HepG2 (cell line): ENCODE measurements at regions of chr9 and their contacts with region 1.

Region 1: DNA sequence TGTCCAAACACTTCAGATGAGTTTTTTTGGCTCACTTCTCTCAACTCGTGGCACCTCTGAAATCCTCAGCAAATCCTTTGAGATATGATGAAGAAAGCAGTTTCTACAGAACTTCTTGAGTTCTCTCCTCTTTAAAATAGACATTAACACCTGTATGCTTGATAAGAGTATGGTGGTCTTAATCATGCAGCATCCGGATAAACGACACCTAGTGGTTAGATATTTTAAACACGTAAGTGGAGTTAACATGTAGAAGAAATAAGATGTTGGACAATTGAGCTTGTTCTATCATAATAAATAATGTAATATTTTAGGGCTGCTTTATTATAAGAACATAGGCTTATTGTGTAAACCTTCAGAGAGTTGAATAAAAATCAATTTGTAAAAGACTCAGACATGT is 324.8 kb downstream of the CYLC2 start:
- DNase-seq: no peak
- ATAC-seq: no peak
- H3K4me3 ChIP-seq: no peak overlapping the region
- H3K27ac ChIP-seq: no peak overlapping the region
- H3K4me1 ChIP-seq: no peaks in the 10 kb centered on the region
- H3K27me3 ChIP-seq: no peaks in the 10 kb centered on the region
- CTCF ChIP-seq: no peak
- EP300 ChIP-seq: no peak
- POLR2A ChIP-seq: no peak
- RAD21 ChIP-seq: no peak

Region 2: GRCh38 chr9:101791938-101792337 is 1528.0 kb before region 1 on chr9:
- CTCF ChIA-PET with region 1: no interaction called
- POLR2A ChIA-PET with region 1: no interaction called
- in situ Hi-C with region 1: no loop called
- intact Hi-C with region 1: loop called (anchors 2 kb)
- DNase-seq: peak; percentile 31
- ATAC-seq: peak; percentile 98
- H3K4me3 ChIP-seq: no peak overlapping the region
- H3K27ac ChIP-seq: no peak overlapping the region
- H3K4me1 ChIP-seq: no peaks in the 10 kb centered on the region
- H3K27me3 ChIP-seq: no peaks in the 10 kb centered on the region
- CTCF ChIP-seq: peak; percentile 81
- EP300 ChIP-seq: no peak
- POLR2A ChIP-seq: no peak
- RAD21 ChIP-seq: 0 out of 2 replicates have a peak, but pooled peaks have one; percentile 17

Region 3: DNA sequence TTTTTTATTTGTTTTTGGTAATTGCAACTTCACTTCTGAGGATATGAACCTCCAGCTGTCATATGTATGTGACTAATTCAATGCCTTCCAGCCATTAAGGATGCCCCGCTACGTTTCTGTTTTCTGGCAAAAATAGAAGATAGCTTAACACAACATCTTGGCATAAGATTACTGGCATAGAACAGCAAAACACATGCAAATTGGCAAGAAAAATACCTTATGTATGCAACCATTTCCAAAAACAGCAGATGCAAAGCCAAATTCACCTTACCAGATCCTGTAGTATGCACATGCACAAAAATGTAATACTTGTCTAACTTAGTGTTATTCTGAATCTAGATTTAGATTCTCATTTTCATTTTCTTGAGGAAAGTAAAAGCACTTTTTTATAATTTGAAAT is 785.9 kb before region 1 on chr9:
- CTCF ChIA-PET with region 1: no interaction called
- POLR2A ChIA-PET with region 1: no interaction called
- in situ Hi-C with region 1: no loop called
- intact Hi-C with region 1: no loop called
- DNase-seq: no peak
- ATAC-seq: no peak
- H3K4me3 ChIP-seq: no peak overlapping the region
- H3K27ac ChIP-seq: no peak overlapping the region
- H3K4me1 ChIP-seq: no peaks in the 10 kb centered on the region
- H3K27me3 ChIP-seq: no peaks in the 10 kb centered on the region
- CTCF ChIP-seq: no peak
- EP300 ChIP-seq: no peak
- POLR2A ChIP-seq: no peak
- RAD21 ChIP-seq: no peak

Region 4: GRCh38 chr9:103304797-103305443 is 15.1 kb before region 1 on chr9:
- CTCF ChIA-PET with region 1: no interaction called
- POLR2A ChIA-PET with region 1: no interaction called
- in situ Hi-C with region 1: no loop called
- intact Hi-C with region 1: no loop called
- DNase-seq: no peak
- ATAC-seq: no peak
- H3K4me3 ChIP-seq: no peak overlapping the region
- H3K27ac ChIP-seq: no peak overlapping the region
- H3K4me1 ChIP-seq: no peaks in the 10 kb centered on the region
- H3K27me3 ChIP-seq: no peaks in the 10 kb centered on the region
- CTCF ChIP-seq: no peak
- EP300 ChIP-seq: no peak
- POLR2A ChIP-seq: no peak
- RAD21 ChIP-seq: no peak

Region 5: DNA sequence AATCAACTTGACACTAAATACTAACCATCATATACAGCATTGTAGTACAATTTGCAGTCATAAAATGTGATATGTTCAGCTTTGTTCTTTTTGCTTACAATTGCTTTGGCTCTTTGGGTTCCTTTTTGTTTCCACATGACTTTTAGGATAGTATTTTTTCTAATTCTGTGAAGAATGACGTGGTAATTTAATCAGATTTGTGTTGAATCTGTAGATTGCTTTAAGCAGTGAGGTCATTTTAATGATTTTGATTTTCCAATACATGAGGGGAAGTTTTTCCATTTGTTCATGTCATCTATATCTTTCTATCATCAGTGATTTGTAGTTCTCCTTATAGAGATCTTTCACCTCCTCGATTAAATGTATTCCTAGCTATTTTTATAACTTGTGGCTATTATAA is 74.0 kb after region 1 on chr9:
- CTCF ChIA-PET with region 1: no interaction called
- POLR2A ChIA-PET with region 1: no interaction called
- in situ Hi-C with region 1: no loop called
- intact Hi-C with region 1: no loop called
- DNase-seq: no peak
- ATAC-seq: no peak
- H3K4me3 ChIP-seq: no peak overlapping the region
- H3K27ac ChIP-seq: no peak overlapping the region
- H3K4me1 ChIP-seq: no peaks in the 10 kb centered on the region
- H3K27me3 ChIP-seq: no peaks in the 10 kb centered on the region
- CTCF ChIP-seq: no peak
- EP300 ChIP-seq: no peak
- POLR2A ChIP-seq: no peak
- RAD21 ChIP-seq: no peak